Activated T-helper 1 cell treated with anti-CD3 and anti-CD28 coated beads, Interleukin-12 subunit alpha, Interleukin-12 subunit beta, Interleukin-2, Interleukin-4 antibody, amounts not matched to agents 30 ng/mL and 10 ng/mL and 1 ng/mL, durations not matched to agents 14 hours and 24 hours and 36 hours (primary cell): ENCODE measurements at regions of chr17 and their contacts with region 1.

Region 1: DNA sequence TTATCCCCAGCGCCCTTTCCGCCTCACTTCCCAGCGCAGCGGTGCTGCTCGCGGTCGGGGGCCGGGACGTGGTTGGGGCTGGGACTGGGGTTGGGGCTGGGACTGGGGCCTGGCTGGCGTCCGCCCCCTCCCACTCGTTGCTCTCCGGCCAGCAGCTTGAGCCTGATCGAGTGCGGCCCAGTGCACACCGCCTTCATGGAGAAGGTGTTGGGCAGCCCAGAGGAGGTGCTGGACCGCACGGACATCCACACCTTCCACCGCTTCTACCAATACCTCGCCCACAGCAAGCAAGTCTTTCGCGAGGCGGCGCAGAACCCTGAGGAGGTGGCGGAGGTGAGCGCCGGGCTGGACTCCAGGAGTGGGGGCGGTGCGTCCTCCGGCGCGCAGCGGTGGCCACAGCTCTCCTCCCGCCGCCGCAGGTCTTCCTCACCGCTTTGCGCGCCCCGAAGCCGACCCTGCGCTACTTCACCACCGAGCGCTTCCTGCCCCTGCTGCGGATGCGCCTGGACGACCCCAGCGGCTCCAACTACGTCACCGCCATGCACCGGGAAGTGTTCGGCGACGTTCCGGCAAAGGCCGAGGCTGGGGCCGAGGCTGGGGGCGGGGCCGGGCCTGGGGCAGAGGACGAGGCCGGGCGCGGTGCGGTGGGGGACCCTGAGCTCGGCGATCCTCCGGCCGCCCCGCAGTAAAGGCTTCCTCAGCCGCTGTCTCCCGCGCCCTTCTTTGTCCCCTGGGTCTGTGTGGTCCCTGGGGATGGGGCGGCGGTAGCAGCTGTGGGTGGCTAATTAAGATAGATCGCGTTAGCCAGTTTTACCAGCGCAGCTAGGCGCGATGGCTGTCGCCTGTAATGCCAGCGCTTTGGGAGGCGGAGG is 1.8 kb downstream of the HSD17B1 start:
- DNase-seq: peak; percentile 75
- H3K4me3 Mint-ChIP-seq: peak overlapping the region; percentile 94
- H3K27ac Mint-ChIP-seq: peak overlapping the region; percentile 95
- H3K4me1 Mint-ChIP-seq: peaks cover 6% of the 10 kb centered on the region
- H3K27me3 Mint-ChIP-seq: no peaks in the 10 kb centered on the region

Region 2: GRCh38 chr17:42502091-42502490 is 52.4 kb before region 1 on chr17:
- intact Hi-C with region 1: no loop called
- DNase-seq: no peak
- H3K4me3 Mint-ChIP-seq: no peak overlapping the region
- H3K27ac Mint-ChIP-seq: no peak overlapping the region
- H3K4me1 Mint-ChIP-seq: no peaks in the 10 kb centered on the region
- H3K27me3 Mint-ChIP-seq: no peaks in the 10 kb centered on the region

Region 3: DNA sequence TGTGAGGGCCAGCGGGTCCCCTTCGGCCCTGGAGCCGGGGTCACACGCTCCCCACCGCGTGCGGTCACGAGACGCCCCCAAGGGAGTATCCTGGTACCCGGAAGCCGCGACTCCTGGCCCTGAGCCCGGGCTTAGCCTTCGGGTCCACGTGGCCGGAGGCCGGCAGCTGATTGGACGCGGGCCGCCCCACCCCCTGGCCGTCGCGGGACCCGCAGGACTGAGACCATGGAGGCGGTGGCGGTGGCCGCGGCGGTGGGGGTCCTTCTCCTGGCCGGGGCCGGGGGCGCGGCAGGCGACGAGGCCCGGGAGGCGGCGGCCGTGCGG is 18.5 kb before region 1 on chr17 and contains the start of gene NAGLU:
- intact Hi-C with region 1: loop called (anchors 1 kb)
- DNase-seq: peak; percentile 85
- H3K4me3 Mint-ChIP-seq: peak within 1 kb of the TSS; percentile 90
- H3K27ac Mint-ChIP-seq: peak within 1 kb of the TSS; percentile 89
- H3K4me1 Mint-ChIP-seq: peaks cover 33% of the 10 kb centered on the region
- H3K27me3 Mint-ChIP-seq: peaks cover 16% of the 10 kb centered on the region
- total RNA-seq, gene NAGLU: 18.2 and 20.8 TPM in 2 replicates